Heart right ventricle (tissue), 16 donors: ENCODE measurements at regions of chr22 and their contacts with region 1.

Region 1: GRCh38 chr22:38766076-38766777 is 10.4 kb upstream of the SUN2 start:
- DNase-seq: peak in 1 of 2 donors; percentile 41
- ATAC-seq: peak in 3 of 8 donors; percentile 18 to 52 (median 37)
- H3K4me3 ChIP-seq: no peak overlapping the region
- H3K27ac ChIP-seq: no peak overlapping the region
- H3K4me1 ChIP-seq: peaks cover 0 to 4% (median 0%) of the 10 kb centered on the region in 9 donors
- H3K27me3 ChIP-seq: peaks cover 0 to 7% (median 0%) of the 10 kb centered on the region in 7 donors
- CTCF ChIP-seq: peak; percentile 28 to 74 (median 64)

Region 2: DNA sequence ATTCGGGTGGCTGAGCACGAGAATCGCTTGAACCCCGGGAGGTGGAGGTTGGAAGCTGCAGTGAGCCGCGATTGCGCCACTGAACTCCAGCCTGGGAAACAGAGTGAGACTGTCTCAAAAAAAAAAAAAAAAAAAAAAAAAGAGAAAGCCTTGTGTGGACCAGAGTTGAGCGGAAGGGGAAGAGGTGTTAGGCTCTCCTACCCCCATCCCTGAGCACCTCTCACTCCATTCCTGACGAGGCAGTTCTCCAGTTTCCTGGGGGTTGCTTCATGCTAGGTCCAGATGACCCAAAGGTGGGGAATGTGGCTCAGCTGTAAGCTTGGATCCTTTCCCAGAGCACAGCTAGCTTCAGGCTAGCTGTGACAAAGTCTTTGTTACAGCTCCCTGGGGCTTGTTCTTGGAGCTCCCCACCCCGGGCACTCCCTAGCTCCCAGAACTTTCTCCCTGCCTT is 36.5 kb after region 1 on chr22:
- intact Hi-C with region 1: loop called in 1 of 10 experiments (anchors 2 kb)
- DNase-seq: peak in 1 of 2 donors; percentile 38
- ATAC-seq: peak in 7 of 8 donors; percentile 58 to 90 (median 79)
- H3K4me3 ChIP-seq: no peak overlapping the region
- H3K27ac ChIP-seq: no peak overlapping the region
- H3K4me1 ChIP-seq: peaks cover 0 to 7% (median 0%) of the 10 kb centered on the region in 9 donors
- H3K27me3 ChIP-seq: no peaks in the 10 kb centered on the region
- CTCF ChIP-seq: no peak

Region 3: DNA sequence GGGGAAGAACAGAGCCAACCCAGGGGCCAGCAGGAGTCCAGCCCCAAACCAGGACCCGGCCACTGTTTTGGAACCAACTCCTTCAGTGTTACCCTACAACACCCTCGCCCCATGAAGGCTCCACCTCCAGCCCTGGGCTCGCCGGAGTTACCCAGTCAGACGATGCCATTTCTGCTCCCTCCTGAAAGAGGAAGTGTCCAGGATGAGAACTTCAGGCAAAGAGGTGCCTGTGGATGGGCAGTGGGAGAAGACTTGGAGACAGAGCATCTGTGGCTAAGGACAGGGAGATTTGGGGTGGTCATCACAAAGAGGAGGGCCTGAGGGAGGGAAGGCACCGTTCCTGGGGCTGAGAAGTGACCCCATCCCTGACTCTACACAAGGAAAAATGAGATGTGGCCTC is 229.9 kb after region 1 on chr22:
- intact Hi-C with region 1: loop called in 6 of 10 experiments (anchors 5 to 10 kb)
- DNase-seq: no peak
- ATAC-seq: no peak
- H3K4me3 ChIP-seq: no peak overlapping the region
- H3K27ac ChIP-seq: no peak overlapping the region
- H3K4me1 ChIP-seq: peaks cover 0 to 7% (median 0%) of the 10 kb centered on the region in 9 donors
- H3K27me3 ChIP-seq: peaks cover 0 to 21% (median 4%) of the 10 kb centered on the region in 7 donors
- CTCF ChIP-seq: no peak

Region 4: GRCh38 chr22:39123751-39124601 is 357.7 kb after region 1 on chr22:
- intact Hi-C with region 1: loop called in 6 of 10 experiments (anchors 2 to 10 kb)
- DNase-seq: no peak
- ATAC-seq: peak in 3 of 8 donors; percentile 23 to 35 (median 32)
- H3K4me3 ChIP-seq: no peak overlapping the region
- H3K27ac ChIP-seq: no peak overlapping the region
- H3K4me1 ChIP-seq: peaks cover 0 to 2% (median 0%) of the 10 kb centered on the region in 9 donors
- H3K27me3 ChIP-seq: no peaks in the 10 kb centered on the region
- CTCF ChIP-seq: no peak

Region 5: DNA sequence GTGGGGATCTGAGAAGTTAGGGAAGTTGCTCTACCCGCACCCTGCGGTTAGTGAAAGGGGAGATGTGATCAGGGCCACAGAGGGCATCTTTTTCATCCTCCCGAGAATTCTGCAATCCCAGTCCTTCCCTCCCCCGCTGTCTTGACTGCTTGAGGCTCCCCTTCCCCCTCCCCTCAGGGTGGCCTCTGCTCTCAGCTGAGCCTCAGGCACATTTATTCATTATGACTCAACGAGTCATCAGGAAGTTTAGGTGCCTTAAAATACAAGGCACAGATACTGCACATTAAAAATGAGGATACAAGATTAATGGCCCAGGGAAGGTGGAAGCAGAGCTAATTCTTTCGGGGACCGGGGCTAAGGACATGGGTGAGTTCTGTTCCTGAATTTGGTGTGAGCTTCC is 908.3 kb after region 1 on chr22:
- intact Hi-C with region 1: no loop called
- DNase-seq: no peak
- ATAC-seq: no peak
- H3K4me3 ChIP-seq: no peak overlapping the region
- H3K27ac ChIP-seq: no peak overlapping the region
- H3K4me1 ChIP-seq: no peaks in the 10 kb centered on the region
- H3K27me3 ChIP-seq: peaks cover 0 to 44% (median 20%) of the 10 kb centered on the region in 7 donors
- CTCF ChIP-seq: no peak